ENCODE measurements at regions of chr17 and their contacts with region 1.

Region 1: DNA sequence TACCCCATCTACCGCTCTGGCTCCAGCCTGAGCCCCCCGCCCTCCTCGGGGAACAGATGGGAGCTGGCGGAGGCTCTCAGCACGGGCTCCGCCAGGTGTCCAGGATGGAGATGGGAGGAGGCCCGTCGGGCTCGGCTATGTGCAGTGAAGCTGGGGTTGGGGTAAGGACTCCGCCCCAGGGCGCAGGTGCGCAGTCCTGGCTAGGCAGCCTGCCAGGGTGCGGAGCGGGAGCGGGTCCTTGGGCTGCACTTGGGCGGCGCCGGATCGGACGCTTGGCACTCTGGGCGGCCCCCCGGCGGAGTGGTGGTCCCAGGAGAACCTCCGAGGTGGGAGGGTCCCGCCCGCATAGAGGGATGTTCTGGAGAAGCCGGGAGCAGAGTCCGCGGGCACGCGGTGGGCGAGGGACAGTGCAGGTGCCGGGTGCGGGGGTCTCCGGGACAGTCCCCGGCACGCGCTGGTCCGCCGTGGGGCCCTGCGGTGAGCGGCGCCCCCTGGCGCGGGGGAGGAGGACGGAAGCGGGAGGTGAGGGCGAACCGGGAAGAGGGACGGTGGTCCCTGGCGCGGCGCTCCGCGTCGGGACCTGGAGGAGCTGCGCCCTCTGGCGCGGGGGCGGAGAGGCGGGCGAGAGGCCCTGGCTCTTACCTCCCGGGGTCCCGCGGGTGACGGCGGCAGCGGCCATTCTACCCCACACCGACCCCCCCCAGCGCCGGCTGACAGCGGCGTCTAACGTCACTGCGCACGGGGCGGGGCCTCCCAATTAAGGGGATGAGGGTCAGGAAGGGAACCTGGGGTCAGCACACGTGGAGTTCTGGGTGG is at the start of gene CAMTA2:
- DNase-seq: peak; percentile 90
- CTCF ChIP-seq: peak; percentile 80

Region 2: GRCh38 chr17:4948931-4949320 is 38.2 kb before region 1 on chr17:
- CTCF ChIA-PET with region 1: interaction called, 12 read pairs
- POLR2A ChIA-PET with region 1: no interaction called
- DNase-seq: peak; percentile 86
- CTCF ChIP-seq: no peak

Region 3: GRCh38 chr17:4997302-4998026 is 10.3 kb after region 1 on chr17 and contains the starts of genes INCA1 and KIF1C:
- CTCF ChIA-PET with region 1: interaction called, 17 read pairs
- POLR2A ChIA-PET with region 1: interaction called, 3 read pairs
- DNase-seq: peak; percentile 99
- CTCF ChIP-seq: no peak

Region 4: DNA sequence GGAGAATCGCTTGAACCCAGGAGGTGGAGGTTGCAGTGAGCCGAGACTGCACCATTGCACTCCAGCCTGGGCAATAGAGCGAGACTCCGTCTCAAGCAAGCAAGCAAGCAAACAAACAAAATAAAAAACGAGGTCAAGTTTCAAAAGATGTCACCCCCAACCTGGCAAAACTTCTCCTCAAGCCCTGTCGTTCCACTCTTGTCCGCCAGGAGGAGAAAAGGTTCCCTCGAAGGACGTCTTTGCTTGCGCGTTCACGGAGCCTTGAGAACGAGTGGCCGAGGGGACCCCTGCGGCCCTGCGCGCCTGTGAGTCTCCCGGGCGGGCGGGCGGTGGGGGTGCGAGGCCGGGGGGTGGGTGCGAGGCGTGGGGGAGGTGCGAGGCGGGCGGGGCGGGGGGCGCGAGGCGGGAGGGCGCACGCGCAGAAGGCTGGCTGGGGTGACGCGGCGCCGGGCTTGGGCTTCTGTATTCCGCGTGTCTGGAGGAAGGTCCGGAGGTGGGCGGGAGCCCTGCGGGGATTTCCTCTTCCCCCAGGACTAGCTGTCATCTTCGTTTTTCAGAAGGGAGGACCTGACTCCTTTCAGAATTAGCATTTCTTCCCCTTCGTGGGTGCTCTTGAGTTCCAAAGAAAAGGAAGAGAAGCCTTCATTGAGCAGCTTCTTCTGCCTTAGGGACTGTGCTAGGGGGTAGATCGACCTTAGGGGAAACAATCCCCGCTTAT is 44.4 kb after region 1 on chr17:
- CTCF ChIA-PET with region 1: interaction called, 10 read pairs
- POLR2A ChIA-PET with region 1: interaction called, 3 read pairs
- DNase-seq: peak; percentile 91
- CTCF ChIP-seq: peak; percentile 73